Activated CD4-positive, alpha-beta T cell treated with anti-CD3 and anti-CD28 coated beads for 36 hours (primary cell): ENCODE measurements at regions of chr3 and their contacts with region 1.

Region 1: DNA sequence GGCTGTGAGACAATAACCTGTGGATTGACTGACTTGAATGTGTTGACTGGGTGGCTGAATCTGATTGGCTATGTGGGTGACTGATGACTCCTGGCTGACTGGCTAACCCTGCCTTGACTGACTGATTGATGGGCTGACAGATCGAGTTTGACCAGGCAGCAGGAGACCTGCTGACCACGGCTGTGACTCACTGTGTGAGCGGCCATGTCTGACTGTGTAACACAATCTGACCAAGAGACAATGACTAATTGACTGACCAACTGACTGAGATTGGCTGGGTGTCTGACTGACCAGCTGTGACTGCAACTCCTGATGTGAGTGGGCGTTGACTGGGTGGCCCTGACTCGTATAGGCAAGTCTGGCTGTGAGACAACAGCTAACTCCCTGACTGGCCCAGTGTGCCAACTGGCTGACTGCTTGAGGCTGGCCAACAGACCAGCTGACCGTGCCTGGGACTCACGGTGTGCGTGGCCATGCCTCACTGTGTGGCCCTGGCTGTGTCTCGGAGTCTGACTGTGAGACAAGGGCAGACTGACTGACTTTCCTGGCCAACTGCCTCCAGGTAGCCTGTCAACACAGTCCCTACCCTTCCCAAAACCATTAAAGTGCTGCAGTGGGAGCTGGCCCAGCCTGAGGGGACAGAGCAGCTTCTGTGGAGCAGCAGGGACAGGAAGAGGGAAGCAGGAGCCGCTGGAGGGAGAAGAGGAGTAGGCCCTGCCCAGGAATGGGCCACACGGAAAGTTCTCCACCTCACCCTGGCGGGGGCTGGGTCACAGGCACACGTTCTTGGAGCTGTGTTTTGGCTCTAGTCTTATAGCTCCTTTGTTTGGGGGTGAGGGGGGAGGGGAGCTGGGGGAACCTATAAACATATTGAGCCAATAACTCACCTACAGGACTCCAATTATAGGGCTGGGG is 508.9 kb downstream of the SHQ1 start:
- DNase-seq: no peak
- ATAC-seq: no peak
- H3K4me3 Mint-ChIP-seq: no peak overlapping the region
- H3K27ac Mint-ChIP-seq: no peak overlapping the region
- H3K4me1 Mint-ChIP-seq: peaks cover 34% of the 10 kb centered on the region
- H3K27me3 Mint-ChIP-seq: no peaks in the 10 kb centered on the region

Region 2: GRCh38 chr3:71725279-71725991 is 613.9 kb before region 1 on chr3 and contains the start of gene EIF4E3:
- CTCF ChIA-PET with region 1: no interaction called
- POLR2A ChIA-PET with region 1: no interaction called
- intact Hi-C with region 1: loop called (anchors 5 to 10 kb)
- DNase-seq: peak; percentile 65
- ATAC-seq: peak; percentile 34
- H3K4me3 Mint-ChIP-seq: peak within 1 kb of the TSS; percentile 91
- H3K27ac Mint-ChIP-seq: peak within 1 kb of the TSS; percentile 95
- H3K4me1 Mint-ChIP-seq: peaks cover 67% of the 10 kb centered on the region
- H3K27me3 Mint-ChIP-seq: no peaks in the 10 kb centered on the region
- total RNA-seq, gene EIF4E3: 28.7 to 29.7 TPM

Region 3: DNA sequence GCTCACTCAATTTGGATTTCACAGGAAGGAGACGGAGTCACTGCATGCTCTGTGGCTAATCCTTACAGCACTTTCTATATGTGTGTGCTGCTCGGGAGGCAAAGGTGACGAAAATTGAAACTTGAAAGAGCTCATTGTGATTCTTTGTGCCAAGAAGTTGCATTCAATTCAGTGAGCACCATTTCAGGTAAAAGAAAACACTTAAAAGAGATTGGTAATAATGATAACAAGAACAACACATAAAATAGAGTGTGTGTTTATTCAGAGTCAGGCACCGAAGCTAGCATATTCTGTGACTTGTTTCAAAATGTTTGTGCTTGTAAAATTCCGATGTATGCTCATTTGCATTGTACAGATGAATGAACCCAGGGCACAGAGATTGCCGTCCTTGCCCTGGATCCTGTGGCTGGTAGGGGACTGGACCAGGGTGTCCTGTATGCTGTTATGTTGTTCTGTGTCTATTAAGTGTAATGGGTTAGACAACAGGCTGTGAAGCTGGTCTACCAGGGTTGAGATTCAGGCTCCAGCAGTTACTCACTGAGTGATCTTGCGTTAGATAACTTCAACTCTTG is 361.1 kb before region 1 on chr3:
- CTCF ChIA-PET with region 1: no interaction called
- POLR2A ChIA-PET with region 1: no interaction called
- intact Hi-C with region 1: loop called in 1 of 2 experiments (anchors 1 kb)
- DNase-seq: peak; percentile 67
- ATAC-seq: peak; percentile 87
- H3K4me3 Mint-ChIP-seq: peak overlapping the region; percentile 44
- H3K27ac Mint-ChIP-seq: peak overlapping the region; percentile 81
- H3K4me1 Mint-ChIP-seq: peaks cover 47% of the 10 kb centered on the region
- H3K27me3 Mint-ChIP-seq: peaks cover 13% of the 10 kb centered on the region

Region 4: DNA sequence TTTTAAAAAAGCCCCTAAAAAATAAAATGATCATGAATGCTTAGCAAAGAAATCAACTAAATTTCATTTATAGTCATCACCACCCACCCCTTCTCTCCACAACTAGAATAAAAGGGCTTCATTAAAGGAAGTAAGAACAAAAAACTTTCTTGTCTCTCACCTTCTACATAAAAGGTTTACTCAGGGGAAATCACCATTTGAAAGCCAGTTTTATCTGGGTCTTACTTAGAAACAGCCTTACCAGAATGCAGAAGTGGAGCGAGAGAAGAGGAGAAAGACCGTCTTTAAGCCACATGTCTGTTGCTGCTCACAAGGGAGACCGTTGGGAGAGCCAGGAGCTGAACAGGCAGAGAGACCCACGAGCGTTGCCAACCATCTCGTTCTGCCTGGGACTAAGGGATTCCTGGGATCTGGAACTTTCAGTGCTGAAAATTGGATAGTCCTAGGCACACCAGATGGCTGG is 204.4 kb before region 1 on chr3:
- CTCF ChIA-PET with region 1: no interaction called
- POLR2A ChIA-PET with region 1: no interaction called
- intact Hi-C with region 1: loop called (anchors 5 kb)
- DNase-seq: peak; percentile 16
- ATAC-seq: peak; percentile 62
- H3K4me3 Mint-ChIP-seq: peak overlapping the region; percentile 54
- H3K27ac Mint-ChIP-seq: peak overlapping the region; percentile 85
- H3K4me1 Mint-ChIP-seq: peaks cover 48% of the 10 kb centered on the region
- H3K27me3 Mint-ChIP-seq: peaks cover 2% of the 10 kb centered on the region

Region 5: DNA sequence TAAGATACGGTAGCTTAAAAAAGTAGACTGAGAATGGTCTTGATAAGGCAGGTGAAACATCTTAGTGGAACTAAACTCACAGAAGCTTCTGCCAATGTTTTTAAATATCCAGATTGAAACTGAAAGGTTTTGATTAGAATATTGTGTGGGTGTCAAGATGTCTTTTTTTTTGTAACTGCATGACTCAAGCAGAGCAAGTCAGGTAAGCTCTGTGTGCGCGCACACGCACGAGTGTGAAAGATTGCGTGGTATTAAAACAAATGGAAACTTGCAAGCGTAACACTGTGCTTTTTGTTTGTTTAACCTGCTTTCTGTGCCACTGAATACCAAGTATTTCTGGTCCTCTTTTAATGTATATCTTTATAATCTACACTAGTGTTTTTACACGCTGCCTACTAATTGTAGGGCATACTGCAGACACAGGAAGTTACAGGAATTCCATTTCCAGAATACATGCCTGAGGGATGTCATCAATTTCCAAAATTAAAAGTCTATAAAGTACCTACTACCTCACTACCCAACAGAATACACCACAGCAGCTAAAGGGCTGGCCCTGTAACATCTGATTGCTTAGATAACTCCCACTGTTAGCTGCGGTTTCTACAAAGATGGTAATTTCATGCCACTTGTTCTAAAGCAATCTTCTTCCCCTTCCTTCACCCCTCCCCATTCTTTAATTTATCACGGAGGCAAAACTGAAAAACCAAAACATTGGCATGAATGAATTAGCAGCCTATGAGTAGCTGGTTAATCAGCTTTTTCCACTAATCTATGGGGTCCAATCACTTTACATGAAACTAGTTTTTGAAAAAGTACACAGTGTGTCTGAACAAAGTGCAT is 36.1 kb after region 1 on chr3:
- CTCF ChIA-PET with region 1: no interaction called
- POLR2A ChIA-PET with region 1: no interaction called
- intact Hi-C with region 1: loop called (anchors 1 kb)
- DNase-seq: peak; percentile 75
- ATAC-seq: peak; percentile 83
- H3K4me3 Mint-ChIP-seq: peak overlapping the region; percentile 36
- H3K27ac Mint-ChIP-seq: peak overlapping the region; percentile 88
- H3K4me1 Mint-ChIP-seq: peaks cover 68% of the 10 kb centered on the region
- H3K27me3 Mint-ChIP-seq: no peaks in the 10 kb centered on the region

Region 6: DNA sequence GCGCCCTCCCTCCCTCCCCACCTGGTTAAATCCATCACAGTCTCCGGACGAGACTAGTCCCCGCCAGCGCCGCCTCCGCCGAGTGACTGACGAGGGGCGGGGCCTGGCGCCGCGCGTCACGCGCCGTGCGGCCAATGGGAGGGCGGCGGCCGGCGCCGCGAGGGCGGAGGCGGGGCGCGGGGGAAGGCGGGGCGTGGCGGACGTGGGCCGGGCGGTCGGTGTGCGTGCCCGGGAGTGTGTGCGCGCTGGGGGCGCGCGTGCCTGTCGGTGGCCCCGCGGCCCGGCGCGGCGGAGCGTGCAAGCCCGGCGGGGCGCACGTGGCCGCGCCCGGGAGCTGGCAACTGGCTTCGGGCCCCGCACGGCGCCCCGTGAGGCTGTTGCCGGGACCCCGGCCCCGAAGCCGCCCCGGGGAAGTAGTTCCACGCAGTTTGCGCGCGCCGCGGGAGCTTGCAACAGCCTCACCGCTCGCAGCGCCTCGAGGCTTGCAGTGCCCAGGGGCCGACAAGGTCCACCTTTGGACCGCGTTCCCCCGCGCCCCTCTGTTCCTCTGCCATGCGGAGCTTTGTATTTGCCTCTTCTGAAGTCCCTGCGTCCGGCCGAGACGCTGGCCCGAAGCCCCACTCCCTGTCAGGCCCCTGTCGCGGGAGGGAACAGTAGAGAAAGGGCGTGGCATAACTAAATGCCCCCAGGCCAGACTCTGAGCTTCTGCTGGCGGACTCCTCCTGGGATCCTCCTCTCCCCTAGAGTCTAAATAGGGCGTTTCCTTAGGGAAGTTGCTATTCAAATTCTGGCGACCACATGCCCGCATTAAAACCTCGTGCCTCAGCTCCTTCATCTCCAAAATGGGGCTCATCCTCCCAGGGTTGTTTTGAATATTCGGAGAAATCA is 107.9 kb after region 1 on chr3:
- CTCF ChIA-PET with region 1: no interaction called
- POLR2A ChIA-PET with region 1: no interaction called
- intact Hi-C with region 1: loop called (anchors 1 to 2 kb)
- DNase-seq: peak; percentile 96
- ATAC-seq: peak; percentile 87
- H3K4me3 Mint-ChIP-seq: peak overlapping the region; percentile 43
- H3K27ac Mint-ChIP-seq: peak overlapping the region; percentile 63
- H3K4me1 Mint-ChIP-seq: peaks cover 38% of the 10 kb centered on the region
- H3K27me3 Mint-ChIP-seq: peaks cover 13% of the 10 kb centered on the region

Region 7: GRCh38 chr3:72523429-72524151 is 184.2 kb after region 1 on chr3:
- CTCF ChIA-PET with region 1: no interaction called
- POLR2A ChIA-PET with region 1: no interaction called
- intact Hi-C with region 1: loop called in 1 of 2 experiments (anchors 1 kb)
- DNase-seq: no peak
- ATAC-seq: no peak
- H3K4me3 Mint-ChIP-seq: no peak overlapping the region
- H3K27ac Mint-ChIP-seq: peak overlapping the region; percentile 55
- H3K4me1 Mint-ChIP-seq: peaks cover 45% of the 10 kb centered on the region
- H3K27me3 Mint-ChIP-seq: no peaks in the 10 kb centered on the region